AG04450 (cell line): ENCODE measurements at regions of chrX and their contacts with region 1.

Region 1: GRCh38 chrX:100768679-100769338 is 36.9 kb upstream of the SYTL4 start:
- DNase-seq: peak; percentile 10
- H3K4me3 ChIP-seq: no peak overlapping the region
- H3K27ac ChIP-seq: no peak overlapping the region
- H3K27me3 ChIP-seq: no peaks in the 10 kb centered on the region
- CTCF ChIP-seq: peak; percentile 99

Region 2: DNA sequence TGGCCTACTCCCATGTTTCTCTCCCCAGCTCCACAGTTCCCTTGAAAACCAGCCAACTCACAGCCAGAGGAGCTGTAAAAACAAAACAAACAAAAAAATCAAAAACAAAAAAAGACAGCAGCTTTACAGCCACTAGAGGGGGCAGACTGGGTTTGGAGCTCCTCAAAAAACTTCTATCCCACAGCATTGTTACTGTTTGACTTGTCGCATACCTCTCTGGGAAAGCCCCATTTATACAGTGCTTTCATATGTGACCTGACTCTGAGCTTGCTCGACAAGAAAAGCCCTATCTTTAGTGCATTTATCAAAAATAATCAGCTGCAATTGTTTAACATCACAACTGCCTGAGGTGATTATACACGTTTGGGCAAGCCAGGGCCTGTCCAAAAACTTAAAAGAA is 153.8 kb before region 1 on chrX:
- CTCF ChIA-PET with region 1: interaction called, 22 read pairs
- POLR2A ChIA-PET with region 1: no interaction called
- DNase-seq: peak; percentile 10
- H3K4me3 ChIP-seq: no peak overlapping the region
- H3K27ac ChIP-seq: no peak overlapping the region
- H3K27me3 ChIP-seq: peaks cover 2% of the 10 kb centered on the region
- CTCF ChIP-seq: peak; percentile 69

Region 3: DNA sequence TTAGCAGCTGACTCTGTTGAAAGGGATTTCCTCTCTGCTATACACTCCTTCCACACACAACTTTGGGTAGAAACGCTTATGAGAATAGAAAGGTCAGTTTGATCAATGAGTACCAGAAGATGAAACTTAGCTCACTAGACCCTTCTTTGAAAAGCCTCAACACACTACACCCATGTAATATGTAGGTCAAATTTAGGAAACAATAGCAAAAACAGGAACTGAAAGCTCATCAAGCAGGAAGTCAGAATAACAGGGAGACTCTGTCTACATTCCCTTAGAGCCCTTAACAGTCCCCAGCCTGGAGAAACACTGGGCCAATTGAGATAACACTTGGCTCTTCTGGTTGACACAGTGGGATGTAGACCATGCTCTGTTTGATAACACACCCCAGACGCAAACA is 94.1 kb before region 1 on chrX:
- CTCF ChIA-PET with region 1: interaction called, 115 read pairs
- POLR2A ChIA-PET with region 1: no interaction called
- DNase-seq: no peak
- H3K4me3 ChIP-seq: no peak overlapping the region
- H3K27ac ChIP-seq: no peak overlapping the region
- H3K27me3 ChIP-seq: no peaks in the 10 kb centered on the region
- CTCF ChIP-seq: no peak

Region 4: DNA sequence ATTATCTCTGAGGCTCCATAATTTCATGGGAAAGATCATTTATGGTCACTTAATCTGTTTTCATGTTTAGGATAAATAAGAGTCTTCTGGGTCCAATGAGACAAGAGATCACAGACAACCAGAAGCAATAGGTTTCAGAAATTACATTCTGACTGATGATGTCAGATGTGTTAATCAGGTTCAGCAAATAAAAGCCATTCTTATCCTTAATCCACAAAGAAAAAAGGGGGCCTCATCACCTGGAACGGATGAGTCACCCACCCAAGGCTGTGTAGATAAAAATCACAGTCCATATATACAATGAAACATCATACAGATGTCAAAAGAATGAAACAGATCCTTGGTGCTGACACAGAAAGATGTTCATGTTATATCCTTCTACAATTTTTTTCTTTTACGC is 73.5 kb before region 1 on chrX:
- CTCF ChIA-PET with region 1: interaction called, 25 read pairs
- POLR2A ChIA-PET with region 1: no interaction called
- DNase-seq: no peak
- H3K4me3 ChIP-seq: no peak overlapping the region
- H3K27ac ChIP-seq: no peak overlapping the region
- H3K27me3 ChIP-seq: no peaks in the 10 kb centered on the region
- CTCF ChIP-seq: no peak

Region 5: GRCh38 chrX:100731441-100732281 is 37.1 kb before region 1 on chrX and contains the start of gene SYTL4:
- CTCF ChIA-PET with region 1: interaction called, 17 read pairs
- POLR2A ChIA-PET with region 1: no interaction called
- DNase-seq: no peak
- H3K4me3 ChIP-seq: peak within 1 kb of the TSS; percentile 72
- H3K27ac ChIP-seq: no peak within 1 kb of the TSS
- H3K27me3 ChIP-seq: no peaks in the 10 kb centered on the region
- CTCF ChIP-seq: no peak
- polyA plus RNA-seq, gene SYTL4: 4.3 and 5.3 TPM in 2 replicates

Region 6: DNA sequence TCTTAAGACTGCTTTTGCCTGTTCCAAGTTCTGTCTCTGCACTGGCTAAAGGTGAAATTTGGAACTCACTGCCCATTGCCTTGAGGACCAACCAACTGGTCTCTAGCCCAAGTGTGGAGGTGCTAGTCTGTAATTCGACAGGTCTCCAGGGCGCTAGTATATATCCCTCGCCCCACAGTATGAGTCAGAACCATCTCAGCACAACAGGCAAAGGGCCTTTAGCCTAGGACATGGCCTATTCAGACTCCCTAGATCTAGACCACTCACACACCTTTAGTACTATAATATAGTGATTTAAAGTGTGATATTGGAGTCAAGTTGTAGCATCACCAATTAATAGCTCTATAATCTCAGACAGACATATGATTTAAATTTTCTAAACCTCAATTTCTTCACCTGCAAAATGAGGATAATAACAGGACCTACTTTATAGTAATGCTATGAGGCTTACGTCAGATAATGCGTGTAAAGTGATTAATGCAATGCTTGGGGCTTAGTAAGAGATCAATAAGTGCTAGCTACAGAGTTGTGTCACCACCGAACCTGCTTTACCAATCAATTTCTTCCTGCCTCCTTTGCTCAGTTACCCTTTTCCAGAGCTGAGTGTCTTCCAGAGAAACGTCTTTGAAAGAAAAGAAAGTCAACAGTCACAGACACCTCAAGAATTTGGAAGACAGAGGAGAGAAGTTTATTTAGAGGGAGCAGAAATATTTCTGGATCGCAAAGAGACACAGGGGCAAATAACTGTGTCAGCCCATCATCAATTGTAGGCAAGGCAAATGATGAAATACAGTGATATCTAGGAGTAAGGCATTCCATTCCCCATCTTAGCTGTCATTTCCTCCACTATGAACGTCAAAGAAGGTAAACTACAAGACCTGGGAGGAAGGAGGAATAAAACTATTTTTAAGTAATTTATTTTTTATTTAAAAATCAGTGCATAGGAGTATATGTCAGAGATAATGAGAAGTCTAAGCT is 103.1 kb after region 1 on chrX:
- CTCF ChIA-PET with region 1: no interaction called
- POLR2A ChIA-PET with region 1: no interaction called
- DNase-seq: no peak
- H3K4me3 ChIP-seq: no peak overlapping the region
- H3K27ac ChIP-seq: no peak overlapping the region
- H3K27me3 ChIP-seq: no peaks in the 10 kb centered on the region
- CTCF ChIP-seq: no peak

Region 7: GRCh38 chrX:101708163-101708562 is 939.4 kb after region 1 on chrX:
- CTCF ChIA-PET with region 1: no interaction called
- POLR2A ChIA-PET with region 1: no interaction called
- DNase-seq: no peak
- H3K4me3 ChIP-seq: no peak overlapping the region
- H3K27ac ChIP-seq: no peak overlapping the region
- H3K27me3 ChIP-seq: no peaks in the 10 kb centered on the region
- CTCF ChIP-seq: no peak